ENCODE measurements at regions of chr14 and their contacts with region 1.

Region 1: GRCh38 chr14:70821584-70822529 is 12.5 kb upstream of the MAP3K9 start:
- DNase-seq: peak; percentile 78
- ATAC-seq: peak; percentile 43
- H3K4me3 Mint-ChIP-seq: peak overlapping the region; percentile 73
- H3K27ac Mint-ChIP-seq: peak overlapping the region; percentile 13
- H3K4me1 Mint-ChIP-seq: peaks cover 16% of the 10 kb centered on the region
- H3K27me3 Mint-ChIP-seq: peaks cover 28% of the 10 kb centered on the region

Region 2: GRCh38 chr14:70498191-70498590 is 323.7 kb before region 1 on chr14:
- CTCF ChIA-PET with region 1: no interaction called
- POLR2A ChIA-PET with region 1: no interaction called
- intact Hi-C with region 1: no loop called
- DNase-seq: no peak
- ATAC-seq: no peak
- H3K4me3 Mint-ChIP-seq: no peak overlapping the region
- H3K27ac Mint-ChIP-seq: no peak overlapping the region
- H3K4me1 Mint-ChIP-seq: no peaks in the 10 kb centered on the region
- H3K27me3 Mint-ChIP-seq: no peaks in the 10 kb centered on the region

Region 3: GRCh38 chr14:70622111-70622712 is 199.6 kb before region 1 on chr14:
- CTCF ChIA-PET with region 1: interaction called, 13 read pairs
- POLR2A ChIA-PET with region 1: no interaction called
- intact Hi-C with region 1: loop called (anchors 1 kb)
- DNase-seq: peak; percentile 68
- ATAC-seq: peak; percentile 80
- H3K4me3 Mint-ChIP-seq: no peak overlapping the region
- H3K27ac Mint-ChIP-seq: no peak overlapping the region
- H3K4me1 Mint-ChIP-seq: no peaks in the 10 kb centered on the region
- H3K27me3 Mint-ChIP-seq: no peaks in the 10 kb centered on the region

Region 4: GRCh38 chr14:70642298-70642960 is 179.4 kb before region 1 on chr14:
- CTCF ChIA-PET with region 1: no interaction called
- POLR2A ChIA-PET with region 1: no interaction called
- intact Hi-C with region 1: no loop called
- DNase-seq: peak; percentile 61
- ATAC-seq: peak; percentile 18
- H3K4me3 Mint-ChIP-seq: peak overlapping the region; percentile 82
- H3K27ac Mint-ChIP-seq: peak overlapping the region; percentile 88
- H3K4me1 Mint-ChIP-seq: peaks cover 45% of the 10 kb centered on the region
- H3K27me3 Mint-ChIP-seq: no peaks in the 10 kb centered on the region

Region 5: GRCh38 chr14:70714055-70714621 is 107.7 kb before region 1 on chr14:
- CTCF ChIA-PET with region 1: interaction called, 5 read pairs
- POLR2A ChIA-PET with region 1: no interaction called
- intact Hi-C with region 1: loop called in 1 of 2 experiments (anchors 1 kb)
- DNase-seq: peak; percentile 64
- ATAC-seq: no peak
- H3K4me3 Mint-ChIP-seq: no peak overlapping the region
- H3K27ac Mint-ChIP-seq: no peak overlapping the region
- H3K4me1 Mint-ChIP-seq: peaks cover 3% of the 10 kb centered on the region
- H3K27me3 Mint-ChIP-seq: no peaks in the 10 kb centered on the region

Region 6: GRCh38 chr14:70809543-70810244 is 12.2 kb before region 1 on chr14:
- CTCF ChIA-PET with region 1: interaction called, 27 read pairs
- POLR2A ChIA-PET with region 1: interaction called, 7 read pairs
- intact Hi-C with region 1: loop called (anchors 1 kb)
- DNase-seq: peak; percentile 96
- ATAC-seq: peak; percentile 87
- H3K4me3 Mint-ChIP-seq: no peak overlapping the region
- H3K27ac Mint-ChIP-seq: peak overlapping the region; percentile 20
- H3K4me1 Mint-ChIP-seq: peaks cover 4% of the 10 kb centered on the region
- H3K27me3 Mint-ChIP-seq: no peaks in the 10 kb centered on the region

Region 7: GRCh38 chr14:70955543-70956480 is 134.0 kb after region 1 on chr14:
- CTCF ChIA-PET with region 1: interaction called, 36 read pairs
- POLR2A ChIA-PET with region 1: no interaction called
- intact Hi-C with region 1: loop called in 1 of 2 experiments (anchors 1 kb)
- DNase-seq: peak; percentile 59
- ATAC-seq: peak; percentile 71
- H3K4me3 Mint-ChIP-seq: no peak overlapping the region
- H3K27ac Mint-ChIP-seq: no peak overlapping the region
- H3K4me1 Mint-ChIP-seq: peaks cover 37% of the 10 kb centered on the region
- H3K27me3 Mint-ChIP-seq: no peaks in the 10 kb centered on the region

Region 8: DNA sequence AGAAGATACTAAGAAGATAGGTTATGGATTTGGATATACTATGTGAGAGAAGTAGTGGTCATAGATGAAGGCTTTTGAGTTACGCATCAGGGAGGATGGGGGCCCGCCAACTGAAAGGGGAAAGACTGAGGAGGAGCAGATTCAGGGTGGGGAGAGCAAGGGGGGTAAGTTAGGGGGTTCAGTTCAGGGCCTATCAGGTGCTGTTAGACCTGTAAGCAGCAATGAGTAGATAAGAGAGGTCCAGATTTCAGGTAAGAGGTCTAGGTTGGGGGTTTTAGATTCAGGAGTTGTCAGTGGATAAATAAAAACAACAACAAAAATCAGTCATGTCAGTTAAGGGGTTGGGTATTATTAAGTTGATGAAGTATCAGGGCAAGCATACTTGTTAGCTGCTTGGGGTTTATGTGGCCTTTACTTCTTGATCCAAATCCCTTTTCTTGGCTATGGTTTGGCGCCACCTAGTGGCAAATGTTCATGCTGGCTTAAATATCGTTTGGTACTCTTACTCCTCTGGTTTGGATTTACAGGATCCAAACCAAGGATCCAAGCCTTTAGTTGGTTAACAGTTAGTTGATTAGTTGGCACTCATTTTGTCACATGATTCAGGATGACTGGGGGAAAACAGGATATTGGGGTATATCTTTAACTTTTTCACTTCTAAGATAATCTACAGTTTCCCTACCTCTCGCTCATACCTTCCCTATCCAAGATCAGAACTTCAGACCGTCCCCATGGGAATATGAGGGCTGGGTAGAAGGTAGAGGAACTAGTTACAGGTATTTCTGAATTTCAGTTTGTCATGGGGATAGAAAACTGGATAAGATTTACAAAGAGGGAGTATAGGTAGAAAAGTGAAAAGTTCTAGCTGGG is 150.5 kb after region 1 on chr14:
- CTCF ChIA-PET with region 1: interaction called, 16 read pairs
- POLR2A ChIA-PET with region 1: no interaction called
- intact Hi-C with region 1: loop called (anchors 1 kb)
- DNase-seq: peak; percentile 91
- ATAC-seq: peak; percentile 88
- H3K4me3 Mint-ChIP-seq: no peak overlapping the region
- H3K27ac Mint-ChIP-seq: peak overlapping the region; percentile 47
- H3K4me1 Mint-ChIP-seq: peaks cover 29% of the 10 kb centered on the region
- H3K27me3 Mint-ChIP-seq: no peaks in the 10 kb centered on the region